ENCODE measurements at regions of chrX and their contacts with region 1.

Region 1: DNA sequence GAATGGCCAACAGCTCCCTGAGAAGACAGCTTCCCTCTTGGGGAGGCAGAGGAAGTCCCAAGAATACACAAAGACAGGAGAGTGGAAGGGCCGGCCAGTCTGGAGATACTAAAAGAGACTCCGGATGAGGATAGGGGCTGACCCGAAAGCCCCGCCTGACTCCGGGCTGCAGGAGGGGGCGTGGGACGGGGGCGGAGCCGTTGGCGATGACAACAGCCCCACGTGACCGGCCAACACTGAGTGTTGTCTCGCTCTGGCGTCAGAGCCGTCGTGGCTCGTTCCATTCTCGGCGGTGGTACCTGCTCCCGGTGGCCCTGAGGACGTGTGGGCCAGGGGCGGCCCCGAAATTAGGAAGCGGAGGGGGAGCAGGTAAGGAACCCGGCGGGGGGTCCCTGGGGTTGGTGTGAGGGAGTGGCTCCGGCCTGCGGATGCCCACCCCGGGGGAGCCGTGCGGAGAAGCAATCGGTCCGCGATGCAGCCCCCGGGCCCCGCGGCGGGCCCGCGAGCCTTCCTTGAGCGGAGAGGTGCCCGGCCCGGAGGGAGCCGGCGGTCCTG is at the start of gene BEX4:
- DNase-seq: peak; percentile 68 to 89 (median 80)
- ATAC-seq: peak; percentile 90
- H3K4me3 ChIP-seq: peak within 1 kb of the TSS; percentile 63 to 68
- H3K4me3 Mint-ChIP-seq: peak within 1 kb of the TSS; percentile 87
- H3K27ac ChIP-seq: peak within 1 kb of the TSS; percentile 84 to 96
- H3K27ac Mint-ChIP-seq: peak within 1 kb of the TSS; percentile 93
- H3K4me1 ChIP-seq: peaks cover 8% of the 10 kb centered on the region
- H3K4me1 Mint-ChIP-seq: peaks cover 16% of the 10 kb centered on the region
- H3K27me3 ChIP-seq: no peaks in the 10 kb centered on the region
- H3K27me3 Mint-ChIP-seq: no peaks in the 10 kb centered on the region
- CTCF ChIP-seq: no peak
- total RNA-seq, gene BEX4: 50.6 to 54.3 TPM

Region 2: GRCh38 chrX:101642093-101642492 is 1572.9 kb before region 1 on chrX:
- CTCF ChIA-PET with region 1: no interaction called
- POLR2A ChIA-PET with region 1: no interaction called
- intact Hi-C with region 1: no loop called
- DNase-seq: no peak
- ATAC-seq: no peak
- H3K4me3 ChIP-seq: no peak overlapping the region
- H3K4me3 Mint-ChIP-seq: no peak overlapping the region
- H3K27ac ChIP-seq: no peak overlapping the region
- H3K27ac Mint-ChIP-seq: no peak overlapping the region
- H3K4me1 ChIP-seq: no peaks in the 10 kb centered on the region
- H3K4me1 Mint-ChIP-seq: no peaks in the 10 kb centered on the region
- H3K27me3 ChIP-seq: no peaks in the 10 kb centered on the region
- H3K27me3 Mint-ChIP-seq: no peaks in the 10 kb centered on the region
- CTCF ChIP-seq: no peak

Region 3: DNA sequence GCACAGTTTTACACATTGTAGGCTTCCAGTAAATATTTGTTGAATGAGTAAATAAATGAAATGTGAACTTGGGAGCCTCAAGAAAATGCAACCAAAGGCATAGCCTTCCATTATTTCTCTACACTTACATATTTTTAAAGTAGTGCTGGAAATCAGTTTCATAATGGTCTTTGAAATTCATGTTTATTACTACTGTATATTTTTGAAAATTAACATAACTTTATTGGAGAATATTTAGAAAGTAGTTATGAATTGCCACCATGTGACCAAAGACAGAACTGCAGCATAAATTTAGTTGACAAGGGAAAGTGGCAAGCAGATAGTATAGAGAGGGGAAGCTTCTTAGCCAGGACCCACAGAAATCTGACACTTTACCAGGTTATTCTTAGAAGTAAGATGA is 33.6 kb after region 1 on chrX:
- CTCF ChIA-PET with region 1: interaction called, 14 read pairs
- POLR2A ChIA-PET with region 1: no interaction called
- intact Hi-C with region 1: loop called (anchors 1 kb)
- DNase-seq: peak in 2 of 9 experiments; percentile 33 to 50
- ATAC-seq: peak; percentile 61
- H3K4me3 ChIP-seq: no peak overlapping the region
- H3K4me3 Mint-ChIP-seq: no peak overlapping the region
- H3K27ac ChIP-seq: no peak overlapping the region
- H3K27ac Mint-ChIP-seq: no peak overlapping the region
- H3K4me1 ChIP-seq: no peaks in the 10 kb centered on the region
- H3K4me1 Mint-ChIP-seq: peaks cover 16% of the 10 kb centered on the region
- H3K27me3 ChIP-seq: no peaks in the 10 kb centered on the region
- H3K27me3 Mint-ChIP-seq: no peaks in the 10 kb centered on the region
- CTCF ChIP-seq: peak; percentile 44

Region 4: GRCh38 chrX:103254921-103255493 is 40.1 kb after region 1 on chrX and contains the start of gene TCEAL8:
- CTCF ChIA-PET with region 1: no interaction called
- POLR2A ChIA-PET with region 1: interaction called, 3 read pairs
- intact Hi-C with region 1: loop called in 1 of 2 experiments (anchors 2 kb)
- DNase-seq: peak; percentile 17 to 86 (median 64)
- ATAC-seq: peak; percentile 93
- H3K4me3 ChIP-seq: peak within 1 kb of the TSS; percentile 63 to 73
- H3K4me3 Mint-ChIP-seq: peak within 1 kb of the TSS; percentile 95
- H3K27ac ChIP-seq: peak within 1 kb of the TSS; percentile 81 to 86
- H3K27ac Mint-ChIP-seq: peak within 1 kb of the TSS; percentile 92
- H3K4me1 ChIP-seq: no peaks in the 10 kb centered on the region
- H3K4me1 Mint-ChIP-seq: peaks cover 34% of the 10 kb centered on the region
- H3K27me3 ChIP-seq: no peaks in the 10 kb centered on the region
- H3K27me3 Mint-ChIP-seq: no peaks in the 10 kb centered on the region
- CTCF ChIP-seq: no peak
- total RNA-seq, gene TCEAL8: 11.3 to 11.8 TPM

Region 5: DNA sequence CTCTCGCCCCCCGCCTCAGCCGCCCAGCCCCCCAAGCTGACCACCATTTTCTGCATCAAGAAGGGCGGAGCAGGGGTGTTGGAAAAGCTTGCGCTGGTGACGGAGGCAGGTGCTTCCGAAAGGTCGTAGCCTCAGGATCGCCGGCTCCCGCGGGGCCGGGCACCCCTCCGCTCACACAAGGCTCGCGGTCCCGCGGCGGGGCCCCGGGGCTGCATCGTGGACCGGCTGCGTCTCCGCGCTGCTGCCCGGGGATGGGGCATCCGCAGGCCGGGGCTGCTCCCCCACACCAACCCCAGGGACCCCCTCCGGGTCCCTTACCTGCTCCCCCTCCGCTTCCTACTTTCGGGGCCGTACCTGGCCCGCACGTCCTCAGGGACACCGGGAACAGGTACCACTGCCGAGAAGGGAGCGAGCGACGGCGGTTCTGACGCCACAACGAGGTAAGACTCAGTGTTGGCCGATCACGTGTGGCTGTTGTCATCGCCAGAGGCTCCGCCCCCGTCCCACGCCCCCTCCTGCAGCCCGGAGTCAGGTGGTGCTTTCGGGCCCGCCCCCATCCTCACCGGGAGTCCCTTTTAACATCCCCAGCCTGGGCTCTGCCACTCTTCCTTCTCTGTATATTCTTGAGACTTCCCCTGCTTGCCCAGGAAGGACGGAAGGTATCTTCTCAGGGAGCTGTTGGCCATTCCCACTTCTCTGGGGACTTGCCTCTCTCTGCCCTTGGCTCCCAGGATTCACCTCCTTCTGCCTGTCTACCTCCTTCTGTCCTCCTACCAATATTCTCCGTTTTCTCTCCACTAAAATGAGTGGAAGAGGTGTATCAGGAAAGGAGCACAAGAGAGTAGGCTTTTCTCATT is 95.8 kb after region 1 on chrX and contains the start of gene BEX2:
- CTCF ChIA-PET with region 1: no interaction called
- POLR2A ChIA-PET with region 1: no interaction called
- intact Hi-C with region 1: loop called (anchors 1 kb)
- DNase-seq: peak; percentile 70 to 91 (median 82)
- ATAC-seq: peak; percentile 98
- H3K4me3 ChIP-seq: peak within 1 kb of the TSS; percentile 55 to 84
- H3K4me3 Mint-ChIP-seq: peak within 1 kb of the TSS; percentile 85
- H3K27ac ChIP-seq: peak within 1 kb of the TSS; percentile 69 to 91
- H3K27ac Mint-ChIP-seq: peak within 1 kb of the TSS; percentile 86
- H3K4me1 ChIP-seq: no peaks in the 10 kb centered on the region
- H3K4me1 Mint-ChIP-seq: peaks cover 8% of the 10 kb centered on the region
- H3K27me3 ChIP-seq: no peaks in the 10 kb centered on the region
- H3K27me3 Mint-ChIP-seq: no peaks in the 10 kb centered on the region
- CTCF ChIP-seq: no peak
- total RNA-seq, gene BEX2: 57.6 to 59.3 TPM

Region 6: DNA sequence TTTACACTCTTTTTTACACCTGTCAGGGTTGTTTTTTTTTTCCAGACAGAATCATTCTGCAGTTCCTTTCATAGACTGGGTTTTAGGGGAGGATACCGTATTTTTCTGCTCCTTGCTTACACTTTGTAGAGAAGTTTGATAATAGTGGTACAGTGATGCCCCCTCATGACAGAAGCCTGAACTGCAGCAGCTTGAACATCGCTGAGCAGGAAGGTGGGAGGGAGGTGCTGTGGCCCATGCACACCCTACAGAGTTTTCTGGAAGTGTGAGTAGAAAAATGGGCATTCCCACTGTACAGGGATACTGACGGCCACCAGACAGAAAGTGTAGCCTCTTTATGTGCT is 249.8 kb after region 1 on chrX:
- CTCF ChIA-PET with region 1: interaction called, 24 read pairs
- POLR2A ChIA-PET with region 1: no interaction called
- intact Hi-C with region 1: loop called (anchors 1 kb)
- DNase-seq: peak; percentile 49 to 81 (median 68)
- ATAC-seq: peak; percentile 94
- H3K4me3 ChIP-seq: peak overlapping the region; percentile 43 to 45
- H3K4me3 Mint-ChIP-seq: peak overlapping the region; percentile 93
- H3K27ac ChIP-seq: no peak overlapping the region
- H3K27ac Mint-ChIP-seq: peak overlapping the region; percentile 90
- H3K4me1 ChIP-seq: no peaks in the 10 kb centered on the region
- H3K4me1 Mint-ChIP-seq: peaks cover 18% of the 10 kb centered on the region
- H3K27me3 ChIP-seq: no peaks in the 10 kb centered on the region
- H3K27me3 Mint-ChIP-seq: no peaks in the 10 kb centered on the region
- CTCF ChIP-seq: peak; percentile 41

Region 7: GRCh38 chrX:103488794-103489193 is 273.8 kb after region 1 on chrX:
- CTCF ChIA-PET with region 1: interaction called, 5 read pairs
- POLR2A ChIA-PET with region 1: no interaction called
- intact Hi-C with region 1: loop called in 1 of 2 experiments (anchors 1 kb)
- DNase-seq: no peak
- ATAC-seq: no peak
- H3K4me3 ChIP-seq: no peak overlapping the region
- H3K4me3 Mint-ChIP-seq: no peak overlapping the region
- H3K27ac ChIP-seq: no peak overlapping the region
- H3K27ac Mint-ChIP-seq: no peak overlapping the region
- H3K4me1 ChIP-seq: no peaks in the 10 kb centered on the region
- H3K4me1 Mint-ChIP-seq: peaks cover 2% of the 10 kb centered on the region
- H3K27me3 ChIP-seq: no peaks in the 10 kb centered on the region
- H3K27me3 Mint-ChIP-seq: no peaks in the 10 kb centered on the region
- CTCF ChIP-seq: no peak